ENCODE measurements at regions of chr10 and their contacts with region 1.

Region 1: GRCh38 chr10:48656241-48656913 is 28.3 kb upstream of the WDFY4 start:
- DNase-seq: peak; percentile 96
- ATAC-seq: peak; percentile 94
- H3K4me3 ChIP-seq: peak overlapping the region; percentile 33 to 59 (median 53)
- H3K4me3 Mint-ChIP-seq: peak overlapping the region; percentile 86
- H3K27ac ChIP-seq: no peak overlapping the region
- H3K27ac Mint-ChIP-seq: peak overlapping the region; percentile 72
- H3K4me1 ChIP-seq: peaks cover 45 to 47% of the 10 kb centered on the region in 2 donors
- H3K4me1 Mint-ChIP-seq: peaks cover 52% of the 10 kb centered on the region
- H3K27me3 ChIP-seq: peaks cover 0 to 16% (median 8%) of the 10 kb centered on the region in 4 experiments
- H3K27me3 Mint-ChIP-seq: peaks cover 4% of the 10 kb centered on the region
- CTCF ChIP-seq: peak; percentile 99

Region 2: DNA sequence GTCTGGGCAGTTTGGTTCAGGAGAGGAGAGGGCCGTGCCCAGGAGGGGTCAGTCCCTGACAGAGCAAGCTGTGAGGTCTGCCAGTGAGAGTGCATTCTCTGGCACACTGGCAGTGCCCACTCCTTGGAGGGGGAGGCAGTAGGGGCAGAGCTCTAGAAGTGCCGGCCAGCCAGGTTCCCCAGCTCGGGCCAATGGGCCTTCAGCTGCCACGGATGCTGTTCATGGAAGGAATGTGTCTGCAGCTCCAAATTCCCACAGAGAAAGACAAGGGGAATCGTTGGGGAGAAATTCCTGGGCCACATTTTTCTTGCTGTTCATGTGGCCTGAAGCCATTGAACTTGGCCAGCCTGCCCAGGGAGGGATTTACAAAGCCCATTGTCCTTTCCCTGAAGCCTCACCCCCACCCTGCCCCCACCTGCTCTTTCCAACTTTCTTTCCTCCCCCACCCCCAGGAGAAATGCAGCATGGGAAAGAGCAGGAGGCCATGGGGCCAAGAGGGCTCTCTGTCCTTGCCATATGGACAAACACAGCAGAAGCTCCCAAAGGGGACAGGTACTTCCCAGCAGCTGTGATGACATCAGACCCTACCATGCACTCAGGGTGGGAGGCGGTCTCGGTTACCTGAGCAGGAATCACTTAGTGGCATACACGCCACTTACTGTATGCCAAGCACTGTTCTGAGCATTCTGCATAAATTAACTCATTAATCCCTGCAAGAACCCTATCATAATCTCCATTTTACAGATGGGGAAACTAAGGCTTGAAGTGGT is 122.2 kb before region 1 on chr10:
- CTCF ChIA-PET with region 1: no interaction called
- POLR2A ChIA-PET with region 1: no interaction called
- intact Hi-C with region 1: no loop called
- DNase-seq: no peak
- ATAC-seq: no peak
- H3K4me3 ChIP-seq: no peak overlapping the region
- H3K4me3 Mint-ChIP-seq: no peak overlapping the region
- H3K27ac ChIP-seq: no peak overlapping the region
- H3K27ac Mint-ChIP-seq: no peak overlapping the region
- H3K4me1 ChIP-seq: no peaks in the 10 kb centered on the region
- H3K4me1 Mint-ChIP-seq: no peaks in the 10 kb centered on the region
- H3K27me3 ChIP-seq: peaks cover 0 to 4% (median 0%) of the 10 kb centered on the region in 4 experiments
- H3K27me3 Mint-ChIP-seq: peaks cover 4% of the 10 kb centered on the region
- CTCF ChIP-seq: no peak

Region 3: DNA sequence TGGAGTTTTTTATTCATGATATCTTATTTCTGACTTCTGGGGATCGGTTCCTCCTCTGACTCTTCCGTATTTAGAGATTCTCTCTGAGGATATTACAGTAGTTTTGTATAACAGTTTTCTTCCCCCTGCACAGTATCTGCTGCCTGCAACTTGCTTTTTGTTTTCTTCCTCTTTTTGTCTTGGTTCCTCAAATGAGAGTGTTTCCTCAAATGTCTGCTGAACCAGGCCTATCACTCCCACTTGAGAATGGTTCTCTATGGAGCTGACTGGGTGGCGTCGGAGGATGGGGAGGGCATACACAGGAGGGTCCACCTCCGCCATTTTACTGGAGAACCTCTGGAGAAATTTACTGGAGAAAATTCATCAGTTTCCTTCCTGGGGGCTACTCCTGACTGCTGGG is 79.2 kb before region 1 on chr10:
- CTCF ChIA-PET with region 1: interaction called, 43 read pairs
- POLR2A ChIA-PET with region 1: interaction called, 4 read pairs
- intact Hi-C with region 1: loop called (anchors 1 kb)
- DNase-seq: peak; percentile 82
- ATAC-seq: peak; percentile 69
- H3K4me3 ChIP-seq: no peak overlapping the region
- H3K4me3 Mint-ChIP-seq: peak overlapping the region; percentile 58
- H3K27ac ChIP-seq: peak overlapping the region; percentile 91 to 94
- H3K27ac Mint-ChIP-seq: peak overlapping the region; percentile 85
- H3K4me1 ChIP-seq: peaks cover 73 to 85% of the 10 kb centered on the region in 2 donors
- H3K4me1 Mint-ChIP-seq: peaks cover 93% of the 10 kb centered on the region
- H3K27me3 ChIP-seq: no peaks in the 10 kb centered on the region
- H3K27me3 Mint-ChIP-seq: no peaks in the 10 kb centered on the region
- CTCF ChIP-seq: no peak

Region 4: DNA sequence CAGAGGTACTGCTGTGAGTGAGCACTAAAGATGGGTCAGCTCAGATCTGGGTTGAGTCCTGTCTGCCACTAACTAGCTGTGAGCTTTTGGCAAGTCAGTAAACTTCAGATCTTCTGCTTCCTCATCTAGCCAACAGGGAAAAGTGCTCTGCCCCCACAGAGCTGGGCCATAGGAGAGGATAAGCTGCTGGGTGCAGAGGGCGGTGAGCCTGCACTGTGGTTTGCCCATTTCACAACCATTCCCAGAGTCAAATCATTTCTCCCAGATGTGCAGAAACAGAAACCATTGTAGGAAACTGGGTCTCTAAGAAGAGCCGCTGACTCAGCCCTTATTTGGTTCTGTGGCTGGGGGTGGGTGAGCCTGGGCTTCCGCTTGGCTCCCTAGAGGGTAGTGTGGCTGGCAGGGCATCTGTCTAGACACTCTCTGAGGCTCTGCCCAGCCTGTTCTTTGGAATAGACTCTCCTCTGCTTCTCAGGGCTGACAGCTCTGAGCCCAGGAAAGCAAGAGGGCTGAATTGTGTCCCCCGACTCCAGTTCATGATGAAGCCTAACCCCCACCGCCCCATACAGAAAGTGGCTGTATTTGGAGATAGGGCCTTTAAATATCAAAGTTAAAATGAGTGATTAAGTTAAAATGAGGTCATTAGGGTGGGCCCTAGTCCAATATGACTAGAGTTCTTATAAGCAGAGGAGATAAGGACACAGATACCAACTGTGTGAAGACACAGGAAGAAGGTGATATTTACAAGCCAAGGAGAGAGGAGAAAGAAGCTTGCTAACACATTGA is 22.0 kb before region 1 on chr10:
- CTCF ChIA-PET with region 1: interaction called, 100 read pairs
- POLR2A ChIA-PET with region 1: no interaction called
- intact Hi-C with region 1: loop called (anchors 1 kb)
- DNase-seq: peak; percentile 86
- ATAC-seq: peak; percentile 100
- H3K4me3 ChIP-seq: peak overlapping the region in 2 of 5 experiments; percentile 7 to 25
- H3K4me3 Mint-ChIP-seq: peak overlapping the region; percentile 80
- H3K27ac ChIP-seq: no peak overlapping the region
- H3K27ac Mint-ChIP-seq: peak overlapping the region; percentile 47
- H3K4me1 ChIP-seq: peaks cover 37 to 40% of the 10 kb centered on the region in 2 donors
- H3K4me1 Mint-ChIP-seq: peaks cover 42% of the 10 kb centered on the region
- H3K27me3 ChIP-seq: peaks cover 0 to 31% (median 16%) of the 10 kb centered on the region in 4 experiments
- H3K27me3 Mint-ChIP-seq: peaks cover 33% of the 10 kb centered on the region
- CTCF ChIP-seq: no peak

Region 5: DNA sequence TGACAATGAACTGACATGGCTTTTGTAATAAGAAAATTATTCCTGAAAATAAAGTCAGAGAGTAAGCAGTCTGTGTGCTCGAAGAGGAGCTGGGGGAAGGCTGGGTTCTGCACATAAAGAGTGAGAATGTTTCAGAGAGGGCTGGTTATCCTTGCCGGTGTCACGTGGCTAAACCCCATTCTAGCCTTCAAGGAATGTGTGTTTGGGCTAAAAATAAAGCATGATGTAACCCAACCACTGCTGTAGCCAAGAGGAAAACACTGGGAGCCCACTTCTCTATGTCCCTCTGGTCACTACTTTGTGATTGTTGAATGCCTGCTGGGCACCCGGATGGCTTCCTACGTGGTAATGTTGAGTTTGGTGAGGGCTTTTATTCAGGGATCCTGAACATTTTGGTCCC is 51.8 kb after region 1 on chr10:
- CTCF ChIA-PET with region 1: interaction called, 521 read pairs
- POLR2A ChIA-PET with region 1: no interaction called
- intact Hi-C with region 1: no loop called
- DNase-seq: no peak
- ATAC-seq: no peak
- H3K4me3 ChIP-seq: no peak overlapping the region
- H3K4me3 Mint-ChIP-seq: no peak overlapping the region
- H3K27ac ChIP-seq: peak overlapping the region in 1 of 2 donors; percentile 57
- H3K27ac Mint-ChIP-seq: peak overlapping the region; percentile 67
- H3K4me1 ChIP-seq: peaks cover 42 to 54% of the 10 kb centered on the region in 2 donors
- H3K4me1 Mint-ChIP-seq: peaks cover 80% of the 10 kb centered on the region
- H3K27me3 ChIP-seq: no peaks in the 10 kb centered on the region
- H3K27me3 Mint-ChIP-seq: no peaks in the 10 kb centered on the region
- CTCF ChIP-seq: no peak

Region 6: GRCh38 chr10:48759113-48759901 is 102.9 kb after region 1 on chr10:
- CTCF ChIA-PET with region 1: interaction called, 47 read pairs
- POLR2A ChIA-PET with region 1: interaction called, 4 read pairs
- intact Hi-C with region 1: no loop called
- DNase-seq: no peak
- ATAC-seq: no peak
- H3K4me3 ChIP-seq: no peak overlapping the region
- H3K4me3 Mint-ChIP-seq: peak overlapping the region; percentile 18
- H3K27ac ChIP-seq: peak overlapping the region; percentile 3 to 39
- H3K27ac Mint-ChIP-seq: peak overlapping the region; percentile 87
- H3K4me1 ChIP-seq: peaks cover 6 to 9% of the 10 kb centered on the region in 2 donors
- H3K4me1 Mint-ChIP-seq: peaks cover 54% of the 10 kb centered on the region
- H3K27me3 ChIP-seq: no peaks in the 10 kb centered on the region
- H3K27me3 Mint-ChIP-seq: no peaks in the 10 kb centered on the region
- CTCF ChIP-seq: no peak

Region 7: GRCh38 chr10:48958598-48959190 is 302.3 kb after region 1 on chr10:
- CTCF ChIA-PET with region 1: no interaction called
- POLR2A ChIA-PET with region 1: no interaction called
- intact Hi-C with region 1: no loop called
- DNase-seq: no peak
- ATAC-seq: no peak
- H3K4me3 ChIP-seq: no peak overlapping the region
- H3K4me3 Mint-ChIP-seq: no peak overlapping the region
- H3K27ac ChIP-seq: no peak overlapping the region
- H3K27ac Mint-ChIP-seq: no peak overlapping the region
- H3K4me1 ChIP-seq: no peaks in the 10 kb centered on the region
- H3K4me1 Mint-ChIP-seq: no peaks in the 10 kb centered on the region
- H3K27me3 ChIP-seq: no peaks in the 10 kb centered on the region
- H3K27me3 Mint-ChIP-seq: no peaks in the 10 kb centered on the region
- CTCF ChIP-seq: no peak

Region 8: DNA sequence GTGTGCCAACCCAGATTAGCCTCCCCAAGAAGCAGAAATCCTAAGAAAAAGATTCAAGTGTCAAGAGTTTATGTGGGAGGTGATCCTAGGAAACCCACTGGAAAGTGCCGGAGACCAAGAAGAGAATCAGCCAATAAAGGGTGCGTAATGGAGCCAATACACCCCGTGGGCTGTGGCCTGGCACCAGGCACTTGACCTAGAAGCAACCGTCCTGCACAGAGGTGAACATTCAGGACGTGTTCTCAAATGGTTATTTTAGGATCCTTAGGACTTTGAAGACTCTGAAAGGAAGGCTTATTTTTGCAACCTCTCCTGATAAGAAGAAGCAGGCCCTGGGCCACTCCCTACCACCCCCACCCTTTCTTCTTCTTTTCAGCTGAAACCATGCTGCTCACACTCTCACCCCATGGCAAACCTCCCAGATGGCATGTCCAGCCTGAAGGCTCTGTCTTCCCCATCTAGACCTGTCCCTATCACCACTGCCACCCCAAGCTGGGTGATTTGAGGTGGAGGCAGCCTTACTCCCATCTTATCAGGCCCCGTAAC is 412.4 kb after region 1 on chr10:
- CTCF ChIA-PET with region 1: no interaction called
- POLR2A ChIA-PET with region 1: no interaction called
- intact Hi-C with region 1: no loop called
- DNase-seq: no peak
- ATAC-seq: no peak
- H3K4me3 ChIP-seq: no peak overlapping the region
- H3K4me3 Mint-ChIP-seq: no peak overlapping the region
- H3K27ac ChIP-seq: no peak overlapping the region
- H3K27ac Mint-ChIP-seq: no peak overlapping the region
- H3K4me1 ChIP-seq: no peaks in the 10 kb centered on the region
- H3K4me1 Mint-ChIP-seq: no peaks in the 10 kb centered on the region
- H3K27me3 ChIP-seq: peaks cover 0 to 13% (median 4%) of the 10 kb centered on the region in 4 experiments
- H3K27me3 Mint-ChIP-seq: peaks cover 22% of the 10 kb centered on the region
- CTCF ChIP-seq: no peak

Region 9: GRCh38 chr10:49518982-49519578 is 862.7 kb after region 1 on chr10:
- CTCF ChIA-PET with region 1: interaction called, 10 read pairs
- POLR2A ChIA-PET with region 1: no interaction called
- intact Hi-C with region 1: loop called (anchors 2 kb)
- DNase-seq: peak; percentile 56
- ATAC-seq: peak; percentile 81
- H3K4me3 ChIP-seq: no peak overlapping the region
- H3K4me3 Mint-ChIP-seq: no peak overlapping the region
- H3K27ac ChIP-seq: no peak overlapping the region
- H3K27ac Mint-ChIP-seq: no peak overlapping the region
- H3K4me1 ChIP-seq: no peaks in the 10 kb centered on the region
- H3K4me1 Mint-ChIP-seq: peaks cover 8% of the 10 kb centered on the region
- H3K27me3 ChIP-seq: no peaks in the 10 kb centered on the region
- H3K27me3 Mint-ChIP-seq: no peaks in the 10 kb centered on the region
- CTCF ChIP-seq: peak; percentile 82